Naive thymus-derived CD4-positive, alpha-beta T cell (primary cell): ENCODE measurements at regions of chr1 and their contacts with region 1.

Region 1: DNA sequence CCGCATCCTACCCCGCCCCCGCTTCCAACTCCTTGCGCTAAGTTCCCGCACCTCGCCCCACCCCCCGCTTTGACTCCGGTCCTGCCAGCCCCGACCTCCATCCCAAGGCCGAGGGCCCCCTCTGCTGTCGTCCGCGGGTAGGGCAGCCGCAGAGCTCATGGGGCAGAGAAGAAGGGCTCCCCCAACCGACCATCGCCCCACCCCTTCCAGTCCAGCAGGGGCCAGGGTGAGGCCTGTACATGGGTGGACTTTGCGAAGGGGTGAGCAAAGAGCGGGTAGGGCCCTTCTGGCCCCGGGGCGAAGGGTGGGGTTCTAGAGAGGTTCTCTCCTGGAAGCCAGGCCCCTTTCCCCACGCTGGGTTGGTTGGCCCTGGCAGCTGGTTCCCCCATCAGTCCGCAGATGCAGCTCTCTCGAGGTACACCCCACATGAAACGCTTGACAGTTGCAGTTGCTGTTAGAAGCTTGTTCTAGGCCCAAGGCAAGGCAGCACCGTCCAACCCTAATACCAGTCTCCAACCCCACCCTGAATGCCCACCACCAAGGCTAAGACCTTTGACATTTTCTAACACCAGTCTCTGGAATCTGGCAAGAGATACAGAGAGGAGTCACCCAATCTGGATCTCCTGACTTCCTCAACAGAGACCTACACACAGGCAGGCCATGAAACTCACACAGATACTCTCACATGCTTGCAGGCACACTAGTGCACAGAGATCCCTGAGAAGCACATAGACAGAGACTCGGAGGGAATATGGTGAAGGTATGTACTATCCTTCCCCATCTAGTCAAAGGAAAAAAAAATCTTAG is 25.3 kb upstream of the ADGRB2 start:
- DNase-seq: peak; percentile 81 to 99 (median 90)
- ATAC-seq: peak; percentile 88
- H3K4me3 ChIP-seq: peak overlapping the region; percentile 68
- H3K4me3 Mint-ChIP-seq: peak overlapping the region; percentile 81 to 93 (median 92)
- H3K27ac ChIP-seq: peak overlapping the region; percentile 82
- H3K27ac Mint-ChIP-seq: peak overlapping the region in 6 of 9 donors; percentile 56 to 94 (median 84)
- H3K4me1 ChIP-seq: peaks cover 3 to 5% of the 10 kb centered on the region in 2 donors
- H3K4me1 Mint-ChIP-seq: peaks cover 7 to 17% (median 9%) of the 10 kb centered on the region in 7 donors
- H3K27me3 ChIP-seq: no peaks in the 10 kb centered on the region
- H3K27me3 Mint-ChIP-seq: peaks cover 0 to 7% (median 0%) of the 10 kb centered on the region in 5 donors

Region 2: DNA sequence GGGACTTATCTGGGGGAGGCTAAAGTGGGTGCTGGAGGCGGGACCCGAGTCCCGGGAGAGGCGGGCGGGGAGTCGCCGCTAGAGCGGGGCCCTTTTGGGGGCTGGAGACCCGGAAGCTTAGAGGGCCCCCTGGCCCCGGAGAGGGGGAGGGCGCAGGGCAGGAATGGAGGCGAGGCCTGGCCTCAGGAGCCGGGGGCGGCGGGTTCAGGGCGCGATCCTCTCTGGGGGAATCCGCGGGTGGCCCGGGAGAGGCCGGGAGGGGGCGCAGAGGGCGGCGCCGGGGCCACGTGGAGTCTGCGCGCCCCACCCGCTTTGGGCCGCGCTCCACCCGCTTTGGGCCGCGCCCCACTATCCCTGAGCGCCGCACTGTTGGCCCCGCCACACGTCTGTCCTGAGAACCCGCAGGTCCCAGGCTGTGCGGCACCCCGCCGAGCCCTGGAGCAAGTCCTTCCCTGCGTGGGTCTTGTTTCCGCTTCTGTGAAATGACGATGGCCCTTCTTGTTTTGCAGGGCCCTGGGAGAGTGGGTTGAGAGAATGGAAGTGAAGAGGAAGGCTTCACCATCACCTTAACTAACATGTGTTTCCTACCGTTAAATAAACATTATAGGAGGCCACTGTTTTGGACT is 634.1 kb before region 1 on chr1:
- CTCF ChIA-PET with region 1: no interaction called
- POLR2A ChIA-PET with region 1: no interaction called
- intact Hi-C with region 1: loop called in 1 of 2 experiments (anchors 5 kb)
- DNase-seq: peak; percentile 20 to 82 (median 37)
- ATAC-seq: peak; percentile 81
- H3K4me3 ChIP-seq: peak overlapping the region; percentile 70
- H3K4me3 Mint-ChIP-seq: peak overlapping the region; percentile 84 to 94 (median 90)
- H3K27ac ChIP-seq: peak overlapping the region; percentile 65
- H3K27ac Mint-ChIP-seq: peak overlapping the region; percentile 41 to 86 (median 77)
- H3K4me1 ChIP-seq: peaks cover 5 to 11% of the 10 kb centered on the region in 2 donors
- H3K4me1 Mint-ChIP-seq: peaks cover 4 to 11% (median 10%) of the 10 kb centered on the region in 7 donors
- H3K27me3 ChIP-seq: no peaks in the 10 kb centered on the region
- H3K27me3 Mint-ChIP-seq: no peaks in the 10 kb centered on the region

Region 3: GRCh38 chr1:31564134-31564989 is 225.1 kb before region 1 on chr1:
- CTCF ChIA-PET with region 1: interaction called, 12 read pairs
- POLR2A ChIA-PET with region 1: no interaction called
- intact Hi-C with region 1: loop called (anchors 1 kb)
- DNase-seq: peak in 7 of 9 donors; percentile 8 to 63 (median 43)
- ATAC-seq: peak; percentile 77
- H3K4me3 ChIP-seq: no peak overlapping the region
- H3K4me3 Mint-ChIP-seq: no peak overlapping the region
- H3K27ac ChIP-seq: no peak overlapping the region
- H3K27ac Mint-ChIP-seq: no peak overlapping the region
- H3K4me1 ChIP-seq: no peaks in the 10 kb centered on the region
- H3K4me1 Mint-ChIP-seq: no peaks in the 10 kb centered on the region
- H3K27me3 ChIP-seq: no peaks in the 10 kb centered on the region
- H3K27me3 Mint-ChIP-seq: peaks cover 17 to 38% (median 25%) of the 10 kb centered on the region in 5 donors

Region 4: DNA sequence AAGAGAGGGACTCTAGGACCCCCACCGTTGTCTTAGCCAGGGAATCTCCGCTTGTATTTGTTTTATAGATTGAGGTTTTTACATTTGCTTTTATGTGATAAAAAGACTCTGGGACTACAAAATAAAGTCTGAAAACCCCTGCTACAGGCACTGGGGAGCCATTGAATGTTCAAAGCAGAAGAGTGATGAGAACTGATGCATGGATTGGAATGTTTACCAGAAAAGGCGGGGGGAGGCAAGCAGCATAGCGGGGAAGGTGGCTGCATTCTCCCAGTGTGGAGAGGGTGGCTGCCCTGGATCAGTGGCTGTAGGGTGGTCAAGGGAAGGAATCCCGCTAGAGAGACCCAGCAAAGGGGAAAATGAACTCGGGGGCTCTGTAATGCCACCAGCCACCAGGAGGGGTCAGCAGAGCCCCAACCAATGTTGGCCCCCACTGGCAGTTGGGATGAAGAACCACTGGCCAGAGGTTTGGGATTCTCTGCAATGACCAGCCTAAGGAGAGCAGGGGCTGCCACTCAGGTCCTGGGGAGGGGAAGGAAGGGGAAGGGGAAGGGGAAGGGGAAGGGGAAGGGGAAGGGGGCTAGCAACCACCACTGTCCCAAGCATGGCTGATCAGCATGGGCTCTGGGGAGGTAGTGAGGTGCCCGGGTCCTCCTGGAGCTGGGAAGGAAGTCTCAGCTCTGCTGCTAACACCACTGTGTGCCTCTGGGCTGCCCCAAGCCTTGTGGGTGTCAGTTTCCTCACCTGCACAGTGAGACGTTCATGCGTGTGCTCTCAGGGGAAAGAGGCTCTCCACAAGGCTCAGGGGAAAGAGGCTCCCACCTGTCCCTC is 125.6 kb before region 1 on chr1:
- CTCF ChIA-PET with region 1: interaction called, 70 read pairs
- POLR2A ChIA-PET with region 1: interaction called, 4 read pairs
- intact Hi-C with region 1: loop called in 1 of 2 experiments (anchors 1 kb)
- DNase-seq: peak; percentile 16 to 66 (median 48)
- ATAC-seq: peak; percentile 73
- H3K4me3 ChIP-seq: no peak overlapping the region
- H3K4me3 Mint-ChIP-seq: no peak overlapping the region
- H3K27ac ChIP-seq: no peak overlapping the region
- H3K27ac Mint-ChIP-seq: peak overlapping the region in 1 of 9 donors; percentile 41
- H3K4me1 ChIP-seq: no peaks in the 10 kb centered on the region
- H3K4me1 Mint-ChIP-seq: peaks cover 0 to 2% (median under 1%) of the 10 kb centered on the region in 7 donors
- H3K27me3 ChIP-seq: no peaks in the 10 kb centered on the region
- H3K27me3 Mint-ChIP-seq: peaks cover under 1 to 9% (median 5%) of the 10 kb centered on the region in 5 donors

Region 5: DNA sequence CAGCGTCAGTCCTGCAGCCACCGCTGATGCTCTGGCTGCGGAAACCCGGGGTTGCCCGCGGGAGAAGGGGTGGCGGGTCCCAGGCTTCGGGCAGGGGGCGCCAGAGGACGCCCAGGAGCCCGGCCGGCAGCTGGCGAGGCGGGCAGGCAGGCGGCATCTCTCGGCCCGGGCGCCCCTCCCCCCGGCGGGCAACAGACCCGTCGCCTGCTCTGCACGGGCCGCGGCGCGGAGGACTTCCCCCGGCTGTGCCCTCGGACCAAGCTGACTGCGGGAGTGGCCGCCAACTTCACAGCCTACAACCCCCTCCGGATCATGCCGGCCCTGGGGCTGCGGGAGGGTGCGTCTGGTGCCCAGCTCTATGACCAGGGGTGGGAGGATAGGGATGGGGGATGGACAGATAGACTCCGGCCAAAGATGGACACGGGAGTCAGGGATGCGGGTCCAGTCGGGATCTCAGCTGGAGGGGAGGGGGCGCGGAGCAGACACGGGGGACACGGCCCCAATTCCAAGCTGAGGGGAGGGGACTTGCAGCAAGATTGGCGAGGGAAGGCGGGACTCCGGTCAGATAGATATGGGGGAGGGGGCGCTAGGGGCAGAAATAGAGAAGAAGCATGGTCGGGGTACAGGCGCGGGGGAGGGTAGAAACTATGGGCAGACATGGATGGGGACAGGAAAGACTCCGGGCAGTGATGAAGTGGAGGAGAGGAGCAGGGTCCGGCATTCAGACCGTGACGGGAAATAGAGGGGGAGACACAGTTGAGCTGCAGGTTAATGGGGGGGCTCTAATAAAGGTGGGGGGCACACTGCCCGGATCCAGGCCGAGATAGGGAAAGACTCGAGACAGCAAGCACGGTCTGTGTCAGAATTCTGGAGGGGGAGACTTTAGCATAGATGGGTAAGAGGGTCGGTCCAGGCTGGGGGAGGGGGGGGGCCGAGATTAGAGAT is 26.5 kb before region 1 on chr1:
- CTCF ChIA-PET with region 1: interaction called, 35 read pairs
- POLR2A ChIA-PET with region 1: interaction called, 6 read pairs
- intact Hi-C with region 1: loop called (anchors 1 kb)
- DNase-seq: peak; percentile 51 to 81 (median 67)
- ATAC-seq: peak; percentile 64
- H3K4me3 ChIP-seq: peak overlapping the region; percentile 48
- H3K4me3 Mint-ChIP-seq: peak overlapping the region; percentile 71 to 89 (median 82)
- H3K27ac ChIP-seq: no peak overlapping the region
- H3K27ac Mint-ChIP-seq: no peak overlapping the region
- H3K4me1 ChIP-seq: peaks cover 23 to 32% of the 10 kb centered on the region in 2 donors
- H3K4me1 Mint-ChIP-seq: peaks cover 6 to 32% (median 26%) of the 10 kb centered on the region in 7 donors
- H3K27me3 ChIP-seq: no peaks in the 10 kb centered on the region
- H3K27me3 Mint-ChIP-seq: peaks cover 0 to 79% (median 4%) of the 10 kb centered on the region in 5 donors

Region 6: GRCh38 chr1:32072622-32073298 is 283.3 kb after region 1 on chr1 and contains the start of gene TMEM39B:
- CTCF ChIA-PET with region 1: interaction called, 3 read pairs
- POLR2A ChIA-PET with region 1: interaction called, 3 read pairs
- intact Hi-C with region 1: loop called in 1 of 2 experiments (anchors 1 kb)
- DNase-seq: peak; percentile 90 to 97 (median 96)
- ATAC-seq: peak; percentile 92
- H3K4me3 ChIP-seq: peak within 1 kb of the TSS; percentile 98
- H3K4me3 Mint-ChIP-seq: peak within 1 kb of the TSS; percentile 83 to 94 (median 91)
- H3K27ac ChIP-seq: peak within 1 kb of the TSS; percentile 82
- H3K27ac Mint-ChIP-seq: peak within 1 kb of the TSS; percentile 84 to 95 (median 92)
- H3K4me1 ChIP-seq: peaks cover 5 to 16% of the 10 kb centered on the region in 2 donors
- H3K4me1 Mint-ChIP-seq: peaks cover 21 to 58% (median 47%) of the 10 kb centered on the region in 7 donors
- H3K27me3 ChIP-seq: no peaks in the 10 kb centered on the region
- H3K27me3 Mint-ChIP-seq: no peaks in the 10 kb centered on the region
- total RNA-seq, gene TMEM39B: 11.4 to 35.9 (median 26.4) TPM